ENCODE measurements at regions of chr4 and their contacts with region 1.

Region 1: GRCh38 chr4:3880615-3881120 is 114.5 kb downstream of the ADRA2C start:
- DNase-seq: peak; percentile 48 to 77 (median 68)
- ATAC-seq: peak; percentile 80 to 95 (median 88)
- H3K4me3 ChIP-seq: no peak overlapping the region
- H3K27ac ChIP-seq: no peak overlapping the region
- H3K4me1 ChIP-seq: peaks cover 0 to 15% (median 10%) of the 10 kb centered on the region in 12 donors
- H3K27me3 ChIP-seq: peaks cover 9 to 83% (median 26%) of the 10 kb centered on the region in 9 donors
- CTCF ChIP-seq: peak; percentile 45 to 75 (median 67)
- POLR2A ChIP-seq: no peak

Region 2: GRCh38 chr4:3747581-3747904 is 133.1 kb before region 1 on chr4:
- intact Hi-C with region 1: loop called in 3 of 10 experiments (anchors 5 to 10 kb)
- DNase-seq: no peak
- ATAC-seq: peak in 1 of 4 donors; percentile 28
- H3K4me3 ChIP-seq: no peak overlapping the region
- H3K27ac ChIP-seq: no peak overlapping the region
- H3K4me1 ChIP-seq: peaks cover 0 to 4% (median 0%) of the 10 kb centered on the region in 12 donors
- H3K27me3 ChIP-seq: peaks cover 11 to 56% (median 37%) of the 10 kb centered on the region in 9 donors
- CTCF ChIP-seq: peak in 11 of 12 donors; percentile 12 to 54 (median 32)
- POLR2A ChIP-seq: no peak

Region 3: GRCh38 chr4:3765271-3766040 is 115.2 kb before region 1 on chr4:
- intact Hi-C with region 1: loop called in 4 of 10 experiments (anchors 5 to 10 kb)
- DNase-seq: peak in 3 of 5 donors; percentile 26 to 42 (median 38)
- ATAC-seq: peak; percentile 19 to 73 (median 52)
- H3K4me3 ChIP-seq: peak overlapping the region in 11 of 12 donors; percentile 22 to 56 (median 47)
- H3K27ac ChIP-seq: peak overlapping the region in 5 of 12 donors; percentile 29 to 70 (median 39)
- H3K4me1 ChIP-seq: peaks cover 0 to 13% (median 0%) of the 10 kb centered on the region in 12 donors
- H3K27me3 ChIP-seq: peaks cover 13 to 54% (median 28%) of the 10 kb centered on the region in 9 donors
- CTCF ChIP-seq: peak in 8 of 12 donors; percentile 5 to 45 (median 25)
- POLR2A ChIP-seq: no peak

Measured in heart left ventricle (tissue), 16 donors.